MCF 10A (cell line): ENCODE measurements at regions of chr1 and their contacts with region 1.

Region 1: GRCh38 chr1:210739627-210740026 is 394.3 kb downstream of the KCNH1 start:
- DNase-seq: peak; percentile 37
- H3K4me3 Mint-ChIP-seq: no peak overlapping the region
- H3K27ac Mint-ChIP-seq: no peak overlapping the region
- H3K4me1 Mint-ChIP-seq: no peaks in the 10 kb centered on the region
- H3K27me3 Mint-ChIP-seq: peaks cover 50% of the 10 kb centered on the region
- CTCF ChIP-seq: no peak

Region 2: DNA sequence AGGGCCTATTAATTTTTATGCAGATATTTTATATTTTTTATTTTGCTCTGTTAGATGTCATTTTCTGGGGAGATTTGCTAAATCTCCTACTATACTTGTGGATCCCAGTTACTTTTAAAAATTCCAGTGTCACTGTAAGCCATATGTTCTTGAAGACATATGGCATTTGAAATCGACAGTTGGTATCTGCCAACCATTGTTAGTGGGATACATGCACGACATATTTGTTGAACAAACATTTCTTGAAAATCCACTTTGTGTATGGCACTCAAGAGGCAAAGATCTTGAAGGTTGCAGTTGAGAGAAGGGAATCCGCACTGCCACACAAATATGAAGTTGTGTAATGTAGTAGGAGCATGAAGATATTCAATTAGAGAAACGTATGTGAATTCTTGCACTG is 123.3 kb before region 1 on chr1:
- CTCF ChIA-PET with region 1: no interaction called
- POLR2A ChIA-PET with region 1: no interaction called
- intact Hi-C with region 1: no loop called
- DNase-seq: no peak
- H3K4me3 Mint-ChIP-seq: no peak overlapping the region
- H3K27ac Mint-ChIP-seq: no peak overlapping the region
- H3K4me1 Mint-ChIP-seq: peaks cover 7% of the 10 kb centered on the region
- H3K27me3 Mint-ChIP-seq: no peaks in the 10 kb centered on the region
- CTCF ChIP-seq: no peak

Region 3: DNA sequence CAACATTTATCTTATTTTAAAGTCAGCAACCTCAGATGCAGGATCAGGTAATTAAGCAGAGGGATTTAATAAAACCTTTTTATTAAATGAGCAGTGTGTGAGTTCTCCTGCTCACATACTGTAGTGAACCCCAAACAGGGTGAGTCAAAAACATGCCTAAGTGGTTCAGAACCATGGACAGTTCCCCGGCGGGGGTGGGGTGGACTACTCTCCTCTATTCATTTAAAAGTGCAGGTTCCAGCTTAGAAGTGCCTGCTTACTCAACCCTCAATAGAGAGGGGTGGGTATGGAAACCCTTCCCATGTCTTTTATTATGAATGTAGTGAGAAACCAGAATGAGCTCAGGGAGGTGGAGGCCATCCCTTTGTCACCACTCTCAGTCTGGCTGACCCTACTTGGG is 13.0 kb before region 1 on chr1:
- CTCF ChIA-PET with region 1: interaction called, 5 read pairs
- POLR2A ChIA-PET with region 1: no interaction called
- intact Hi-C with region 1: loop called (anchors 1 kb)
- DNase-seq: peak; percentile 88
- H3K4me3 Mint-ChIP-seq: no peak overlapping the region
- H3K27ac Mint-ChIP-seq: no peak overlapping the region
- H3K4me1 Mint-ChIP-seq: no peaks in the 10 kb centered on the region
- H3K27me3 Mint-ChIP-seq: peaks cover 15% of the 10 kb centered on the region
- CTCF ChIP-seq: no peak